Activated T-helper 2 cell treated with anti-CD3 and anti-CD28 coated beads, Interferon-gamma antibody, Interleukin-2, Interleukin-4, amounts not matched to agents 10 μg/mL and 5 μg/mL and 100 μg/mL, durations not matched to agents 14 hours and 24 hours and 36 hours (primary cell): ENCODE measurements at regions of chr19 and their contacts with region 1.

Region 1: DNA sequence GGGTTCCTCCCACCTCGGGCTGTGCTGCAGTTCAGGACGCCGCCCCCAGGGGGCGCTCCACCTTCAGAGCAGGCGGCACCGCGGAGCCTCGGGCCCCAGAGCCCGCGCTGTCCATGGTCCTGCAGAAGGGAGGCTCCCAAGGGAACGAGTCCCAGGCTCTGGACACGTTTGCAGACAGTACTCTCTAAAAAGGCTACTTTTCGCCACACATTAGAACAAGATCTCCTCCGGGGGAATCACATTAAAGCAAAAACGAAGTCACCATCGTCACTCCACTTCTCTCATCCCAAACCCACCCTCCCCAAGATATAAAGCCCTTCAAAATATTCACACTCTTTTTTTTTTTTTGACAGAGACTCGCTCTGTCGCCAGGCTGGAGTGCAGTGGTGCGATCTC is 4.6 kb upstream of the SIGLEC10 start:
- DNase-seq: peak; percentile 80
- H3K4me3 Mint-ChIP-seq: peak overlapping the region; percentile 26
- H3K27ac Mint-ChIP-seq: no peak overlapping the region
- H3K4me1 Mint-ChIP-seq: peaks cover 22% of the 10 kb centered on the region
- H3K27me3 Mint-ChIP-seq: no peaks in the 10 kb centered on the region

Region 2: GRCh38 chr19:51473009-51473707 is 51.1 kb after region 1 on chr19:
- intact Hi-C with region 1: loop called (anchors 2 kb)
- DNase-seq: peak; percentile 67
- H3K4me3 Mint-ChIP-seq: no peak overlapping the region
- H3K27ac Mint-ChIP-seq: peak overlapping the region; percentile 29
- H3K4me1 Mint-ChIP-seq: peaks cover 37% of the 10 kb centered on the region
- H3K27me3 Mint-ChIP-seq: no peaks in the 10 kb centered on the region

Region 3: GRCh38 chr19:51514866-51515481 is 92.9 kb after region 1 on chr19:
- intact Hi-C with region 1: loop called (anchors 5 kb)
- DNase-seq: no peak
- H3K4me3 Mint-ChIP-seq: no peak overlapping the region
- H3K27ac Mint-ChIP-seq: no peak overlapping the region
- H3K4me1 Mint-ChIP-seq: peaks cover 22% of the 10 kb centered on the region
- H3K27me3 Mint-ChIP-seq: peaks cover under 1% of the 10 kb centered on the region

Region 4: DNA sequence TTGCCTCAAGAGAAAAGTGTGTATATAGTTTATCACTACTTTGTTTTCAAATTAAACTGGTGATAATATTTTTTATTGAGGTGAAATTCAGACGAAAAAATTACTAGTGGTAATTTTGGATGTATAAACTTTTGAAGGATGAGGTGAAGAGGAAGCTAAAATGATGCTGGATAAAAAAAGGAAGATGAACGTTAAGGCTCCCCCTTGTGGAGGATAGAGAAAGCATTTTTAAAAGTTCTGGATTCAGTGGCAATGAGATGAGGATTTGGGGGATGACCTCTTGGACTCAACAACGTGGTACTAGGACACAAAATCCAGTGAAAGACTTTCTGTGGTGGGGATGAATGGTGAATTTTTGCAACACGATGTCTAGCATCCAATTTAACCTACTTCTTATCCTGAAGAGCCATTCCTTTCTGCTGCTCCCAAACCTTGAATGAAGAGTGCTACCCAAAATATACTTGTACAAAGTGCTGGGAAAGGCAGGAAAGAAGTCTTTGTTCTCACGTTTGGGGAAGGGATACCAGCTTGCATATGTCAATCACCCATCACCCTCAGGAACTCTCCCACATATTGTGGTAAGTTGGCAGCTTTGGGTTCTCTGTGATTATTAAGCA is 215.4 kb after region 1 on chr19:
- intact Hi-C with region 1: loop called (anchors 5 kb)
- DNase-seq: no peak
- H3K4me3 Mint-ChIP-seq: no peak overlapping the region
- H3K27ac Mint-ChIP-seq: no peak overlapping the region
- H3K4me1 Mint-ChIP-seq: no peaks in the 10 kb centered on the region
- H3K27me3 Mint-ChIP-seq: peaks cover 39% of the 10 kb centered on the region

Region 5: DNA sequence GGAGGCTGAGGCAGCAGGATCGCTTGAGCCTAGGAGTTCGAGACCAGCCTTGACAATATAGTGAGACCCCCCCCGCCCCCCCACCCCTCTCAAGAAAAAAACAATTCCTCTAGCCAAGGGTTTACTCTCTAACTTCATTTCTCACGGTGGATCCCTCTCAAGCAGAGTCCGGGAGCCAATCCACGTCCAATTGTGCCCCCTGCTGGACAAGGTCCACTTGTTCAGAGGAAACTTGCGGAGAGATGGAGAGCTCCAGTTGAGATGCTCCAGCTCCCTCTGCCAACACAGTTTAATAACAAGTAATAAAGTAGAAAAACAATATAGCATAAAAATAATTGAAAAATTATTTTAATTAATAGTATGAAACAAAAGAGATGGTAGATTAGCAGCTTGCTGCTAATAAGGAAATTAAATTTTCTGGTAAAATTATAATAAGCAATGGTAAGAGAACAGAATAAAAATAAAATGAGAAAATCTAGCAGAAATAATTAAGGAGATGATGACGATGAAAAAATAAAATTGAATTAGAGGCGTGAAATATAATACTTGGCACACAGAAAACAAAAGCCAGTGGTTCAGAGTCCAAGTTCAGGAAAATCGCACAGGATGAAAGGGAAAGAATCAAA is 239.0 kb after region 1 on chr19:
- intact Hi-C with region 1: loop called (anchors 1 kb)
- DNase-seq: peak; percentile 26
- H3K4me3 Mint-ChIP-seq: no peak overlapping the region
- H3K27ac Mint-ChIP-seq: no peak overlapping the region
- H3K4me1 Mint-ChIP-seq: peaks cover 5% of the 10 kb centered on the region
- H3K27me3 Mint-ChIP-seq: peaks cover 21% of the 10 kb centered on the region